ENCODE measurements at regions of chr1 and their contacts with region 1.

Region 1: DNA sequence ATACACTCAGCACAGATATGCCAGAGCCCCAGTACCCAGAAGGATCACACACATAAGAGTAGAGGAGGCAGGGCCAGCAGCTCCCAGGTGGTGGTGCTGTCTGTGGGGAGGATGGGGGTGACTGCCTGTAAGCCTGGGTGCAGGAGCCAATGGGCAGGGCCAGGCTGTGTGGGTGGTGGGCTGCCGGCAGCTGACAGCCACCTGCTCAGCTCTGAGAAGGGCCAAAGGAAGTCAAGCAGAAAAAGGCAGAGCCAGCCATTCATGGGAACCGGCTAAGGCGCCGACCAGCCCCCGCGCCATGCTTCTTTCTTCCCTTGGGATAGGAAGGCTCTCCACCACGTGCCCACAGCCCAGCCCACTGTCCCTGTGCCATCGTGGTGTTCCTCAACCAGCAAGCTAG is 14.1 kb downstream of the PIK3C2B start:
- DNase-seq: no peak
- ATAC-seq: peak; percentile 48
- H3K4me3 ChIP-seq: no peak overlapping the region
- H3K4me3 Mint-ChIP-seq: no peak overlapping the region
- H3K27ac ChIP-seq: no peak overlapping the region
- H3K27ac Mint-ChIP-seq: no peak overlapping the region
- H3K4me1 ChIP-seq: peaks cover 31% of the 10 kb centered on the region
- H3K4me1 Mint-ChIP-seq: peaks cover 69% of the 10 kb centered on the region
- H3K27me3 ChIP-seq: no peaks in the 10 kb centered on the region
- H3K27me3 Mint-ChIP-seq: no peaks in the 10 kb centered on the region
- CTCF ChIP-seq: no peak

Region 2: DNA sequence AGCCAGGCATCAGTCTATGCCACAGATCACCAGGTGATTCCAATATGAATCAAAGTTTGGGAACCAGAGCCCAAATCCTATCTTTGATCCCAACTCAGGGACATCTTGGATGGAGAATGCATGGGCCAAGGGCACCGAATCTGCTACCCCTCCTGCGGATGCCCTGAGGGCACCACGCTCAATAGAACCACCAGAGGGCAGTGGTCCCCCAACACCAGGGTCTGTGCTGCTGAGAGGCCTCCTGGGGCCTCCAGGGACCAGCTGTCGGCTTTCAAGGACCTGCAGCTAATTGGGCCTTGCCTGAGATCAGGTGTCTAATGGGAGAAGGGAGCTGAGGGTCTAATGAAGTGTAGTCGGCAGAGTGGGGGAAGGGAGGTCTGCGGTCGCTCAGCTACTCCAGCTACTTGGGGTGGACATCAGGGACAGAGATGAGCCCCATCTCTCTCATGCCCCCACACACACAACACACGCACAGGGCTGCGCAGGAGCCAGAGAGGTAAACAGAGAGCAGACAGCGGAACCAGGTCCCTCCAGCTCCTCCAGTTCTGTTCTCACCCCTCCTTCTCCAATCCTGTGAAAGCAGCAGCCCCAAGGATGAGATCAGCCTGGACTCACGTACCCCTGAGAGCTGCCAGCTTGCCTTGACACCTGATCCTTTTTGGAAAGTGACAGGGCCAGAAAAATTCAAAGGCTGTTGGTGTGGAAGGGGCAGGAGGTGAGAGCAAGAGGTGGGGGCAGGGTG is 34.0 kb before region 1 on chr1:
- CTCF ChIA-PET with region 1: interaction called, 1,205 read pairs
- POLR2A ChIA-PET with region 1: interaction called, 3 read pairs
- intact Hi-C with region 1: no loop called
- DNase-seq: peak; percentile 58 to 86 (median 81)
- ATAC-seq: peak; percentile 98
- H3K4me3 ChIP-seq: no peak overlapping the region
- H3K4me3 Mint-ChIP-seq: no peak overlapping the region
- H3K27ac ChIP-seq: no peak overlapping the region
- H3K27ac Mint-ChIP-seq: peak overlapping the region; percentile 78
- H3K4me1 ChIP-seq: peaks cover 11% of the 10 kb centered on the region
- H3K4me1 Mint-ChIP-seq: peaks cover 8% of the 10 kb centered on the region
- H3K27me3 ChIP-seq: no peaks in the 10 kb centered on the region
- H3K27me3 Mint-ChIP-seq: no peaks in the 10 kb centered on the region
- CTCF ChIP-seq: peak; percentile 65

Region 3: GRCh38 chr1:204600968-204601367 is 120.5 kb after region 1 on chr1:
- CTCF ChIA-PET with region 1: no interaction called
- POLR2A ChIA-PET with region 1: no interaction called
- intact Hi-C with region 1: no loop called
- DNase-seq: no peak
- ATAC-seq: no peak
- H3K4me3 ChIP-seq: no peak overlapping the region
- H3K4me3 Mint-ChIP-seq: no peak overlapping the region
- H3K27ac ChIP-seq: no peak overlapping the region
- H3K27ac Mint-ChIP-seq: no peak overlapping the region
- H3K4me1 ChIP-seq: no peaks in the 10 kb centered on the region
- H3K4me1 Mint-ChIP-seq: no peaks in the 10 kb centered on the region
- H3K27me3 ChIP-seq: no peaks in the 10 kb centered on the region
- H3K27me3 Mint-ChIP-seq: peaks cover 2% of the 10 kb centered on the region
- CTCF ChIP-seq: no peak

Region 4: DNA sequence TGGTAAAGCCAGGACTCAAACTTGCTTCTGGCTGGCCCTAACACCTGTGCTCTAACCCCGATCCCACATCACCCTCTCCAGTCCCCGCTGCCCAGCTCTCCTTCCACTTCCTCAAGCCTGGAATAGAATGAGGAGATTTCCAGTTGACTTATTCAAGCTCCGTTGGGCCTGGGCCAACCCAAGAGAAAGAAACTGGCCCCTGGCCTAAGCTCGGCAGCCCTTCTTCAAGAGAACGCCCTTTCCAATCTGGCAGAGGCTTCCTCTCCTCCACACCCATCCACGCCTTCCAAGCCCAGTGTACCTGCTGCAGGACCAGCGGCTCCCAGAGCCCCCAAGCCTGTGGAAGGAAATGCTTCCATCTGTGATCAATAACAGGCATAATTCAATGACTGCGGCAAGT is 153.2 kb after region 1 on chr1:
- CTCF ChIA-PET with region 1: no interaction called
- POLR2A ChIA-PET with region 1: no interaction called
- intact Hi-C with region 1: no loop called
- DNase-seq: no peak
- ATAC-seq: no peak
- H3K4me3 ChIP-seq: no peak overlapping the region
- H3K4me3 Mint-ChIP-seq: no peak overlapping the region
- H3K27ac ChIP-seq: no peak overlapping the region
- H3K27ac Mint-ChIP-seq: no peak overlapping the region
- H3K4me1 ChIP-seq: no peaks in the 10 kb centered on the region
- H3K4me1 Mint-ChIP-seq: no peaks in the 10 kb centered on the region
- H3K27me3 ChIP-seq: peaks cover 4 to 8% of the 10 kb centered on the region in 2 experiments
- H3K27me3 Mint-ChIP-seq: peaks cover 18% of the 10 kb centered on the region
- CTCF ChIP-seq: no peak